ENCODE measurements at regions of chr4 and their contacts with region 1.

Region 1: GRCh38 chr4:101282076-101282844 is 65.1 kb downstream of the PPP3CA start:
- DNase-seq: no peak

Region 2: GRCh38 chr4:101114936-101115372 is 167.3 kb before region 1 on chr4:
- intact Hi-C with region 1: no loop called
- DNase-seq: no peak

Region 3: DNA sequence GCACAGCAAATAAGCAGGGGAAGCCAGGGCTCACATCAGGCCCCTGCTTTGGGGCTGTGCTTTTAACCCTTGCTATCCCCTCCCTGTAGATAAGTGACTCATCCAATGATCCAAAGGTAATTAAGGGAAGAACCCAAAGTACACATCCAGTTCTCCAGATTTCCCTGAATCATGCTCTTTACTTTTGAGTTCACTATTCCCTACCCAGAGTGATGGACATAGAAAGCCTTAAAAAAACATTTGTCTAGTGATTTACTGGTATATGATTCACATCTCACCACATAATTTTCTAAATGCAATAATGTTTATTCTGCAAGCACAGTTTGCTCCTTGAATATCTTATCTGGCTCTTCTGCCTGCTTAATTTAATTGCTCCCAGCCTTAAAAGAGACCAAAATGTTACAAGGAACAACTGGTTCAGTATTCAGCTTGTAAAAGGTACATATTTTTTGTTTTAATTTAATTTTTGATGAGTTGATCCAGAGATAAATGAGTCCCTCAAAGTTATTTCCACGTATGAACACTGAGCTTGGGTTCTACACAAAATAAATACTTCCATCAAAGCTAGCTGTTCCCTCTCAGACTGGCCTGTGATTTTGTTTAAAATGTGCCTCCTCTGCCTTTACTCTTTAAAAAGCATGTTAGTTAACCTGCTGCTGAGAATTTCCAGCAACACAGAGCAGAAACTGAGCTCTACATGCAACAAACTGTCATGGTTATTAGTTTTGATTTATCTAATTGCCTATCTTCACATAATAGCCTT is 70.9 kb before region 1 on chr4:
- intact Hi-C with region 1: no loop called
- DNase-seq: no peak

Region 4: DNA sequence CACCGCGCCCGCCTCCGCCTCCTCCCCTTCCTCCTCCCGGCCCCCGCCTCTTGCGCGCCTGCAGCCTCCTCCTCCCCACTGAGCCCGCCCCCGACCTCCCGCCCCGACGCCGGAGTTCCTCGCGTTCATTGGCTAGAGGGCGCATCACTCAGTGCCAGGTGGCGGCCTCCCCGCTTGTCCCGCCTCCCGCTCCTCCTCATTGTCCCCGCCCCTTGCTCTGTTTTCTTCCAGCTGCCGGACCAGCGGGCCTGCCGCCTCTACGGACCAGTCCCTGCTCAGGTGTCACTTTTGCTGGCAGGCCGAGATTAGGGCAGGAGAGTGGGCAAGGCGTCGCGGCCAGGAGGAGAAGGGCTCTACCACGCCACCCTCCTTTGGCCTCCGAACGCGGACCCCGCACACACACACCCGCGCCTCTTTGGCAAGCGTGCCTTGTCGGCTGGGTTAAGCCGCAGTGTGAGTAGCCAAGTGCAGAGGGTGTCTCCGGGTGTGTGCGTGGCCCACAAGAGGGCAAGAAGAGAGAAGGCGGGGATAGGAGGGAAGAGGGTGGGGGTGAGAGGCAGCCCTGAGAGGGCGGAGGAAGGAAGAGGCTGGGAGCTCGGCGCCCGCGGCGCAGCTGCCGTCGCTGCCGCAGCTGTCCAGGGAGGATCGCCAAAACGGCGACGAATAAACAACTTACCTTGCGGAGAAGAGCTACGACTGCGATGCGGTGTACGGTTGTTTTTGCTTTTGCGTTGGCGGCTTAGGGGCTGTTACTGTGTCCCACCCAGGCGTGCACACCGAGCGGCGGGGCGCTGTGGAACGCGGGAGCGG is 65.5 kb after region 1 on chr4:
- intact Hi-C with region 1: no loop called
- DNase-seq: peak; percentile 100

Region 5: DNA sequence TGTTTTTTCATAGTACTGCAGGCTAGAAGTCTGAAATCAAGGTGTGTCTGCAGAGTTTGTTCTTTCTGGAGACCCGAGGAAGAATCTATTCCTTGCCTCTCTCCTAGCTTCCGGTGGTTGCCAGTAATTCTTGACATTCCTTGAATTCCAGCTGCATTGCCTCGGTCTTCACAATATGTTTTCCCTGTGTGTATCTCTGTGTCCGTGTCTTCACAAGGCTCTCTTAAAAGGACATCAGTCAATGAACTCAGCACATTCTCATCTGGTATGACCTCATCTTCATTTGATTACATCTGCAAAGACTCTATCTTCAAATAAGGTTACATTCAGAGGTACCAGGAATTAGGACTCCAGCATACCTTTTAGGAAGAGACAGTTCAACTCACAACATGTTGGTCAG is 671.7 kb after region 1 on chr4:
- intact Hi-C with region 1: loop called in 1 of 2 experiments (anchors 10 kb)
- DNase-seq: no peak

Measured in posterior vena cava (tissue), 2 donors.